Activated B cell treated with CpG ODN at 0.5 μM for 24 hours (primary cell): ENCODE measurements at regions of chr1 and their contacts with region 1.

Region 1: DNA sequence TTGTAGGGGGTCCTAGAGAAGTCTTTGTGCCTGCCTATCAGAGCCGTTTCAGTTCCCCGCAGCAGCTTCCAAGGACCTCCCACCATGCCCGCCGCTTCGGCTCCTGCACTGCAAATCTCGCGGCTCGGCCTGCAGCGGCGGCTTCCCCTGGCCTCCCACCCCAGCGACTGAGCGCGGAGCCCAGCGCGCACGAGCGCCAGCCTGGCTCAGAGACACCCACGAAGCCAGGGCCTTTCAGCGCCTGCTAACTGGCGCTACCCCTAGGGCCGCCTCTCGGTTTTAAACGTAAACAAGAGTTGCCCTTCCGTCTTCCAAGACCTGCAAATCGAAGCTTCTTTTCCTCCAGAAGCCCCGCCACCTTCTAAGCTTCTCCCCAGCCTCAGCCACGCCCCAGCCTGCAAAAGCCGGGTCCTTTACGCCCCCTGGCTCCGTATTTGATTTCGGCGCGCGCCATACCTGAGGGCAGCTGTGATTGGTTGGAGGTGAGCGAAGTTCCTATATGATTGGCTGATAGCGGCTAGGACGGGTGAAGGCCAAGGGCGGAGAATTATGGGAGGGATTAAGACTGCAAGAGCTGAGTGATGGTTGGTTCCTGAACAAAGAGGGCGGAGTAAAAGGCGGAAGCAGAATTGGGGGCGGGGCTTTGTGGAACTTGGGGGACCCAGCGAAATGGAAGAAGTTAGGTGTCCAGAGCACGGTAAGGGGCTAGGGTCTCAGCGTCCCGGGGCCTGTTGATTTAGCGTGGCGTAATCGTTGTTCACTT is at the start of gene TTF2:
- DNase-seq: peak; percentile 80
- ATAC-seq: peak; percentile 97
- H3K4me3 Mint-ChIP-seq: no peak within 1 kb of the TSS
- H3K27ac Mint-ChIP-seq: no peak within 1 kb of the TSS
- H3K4me1 Mint-ChIP-seq: peaks cover 26% of the 10 kb centered on the region
- H3K27me3 Mint-ChIP-seq: no peaks in the 10 kb centered on the region
- CTCF ChIP-seq: no peak
- total RNA-seq, gene TTF2: 33.4 and 37.7 TPM in 2 replicates

Region 2: DNA sequence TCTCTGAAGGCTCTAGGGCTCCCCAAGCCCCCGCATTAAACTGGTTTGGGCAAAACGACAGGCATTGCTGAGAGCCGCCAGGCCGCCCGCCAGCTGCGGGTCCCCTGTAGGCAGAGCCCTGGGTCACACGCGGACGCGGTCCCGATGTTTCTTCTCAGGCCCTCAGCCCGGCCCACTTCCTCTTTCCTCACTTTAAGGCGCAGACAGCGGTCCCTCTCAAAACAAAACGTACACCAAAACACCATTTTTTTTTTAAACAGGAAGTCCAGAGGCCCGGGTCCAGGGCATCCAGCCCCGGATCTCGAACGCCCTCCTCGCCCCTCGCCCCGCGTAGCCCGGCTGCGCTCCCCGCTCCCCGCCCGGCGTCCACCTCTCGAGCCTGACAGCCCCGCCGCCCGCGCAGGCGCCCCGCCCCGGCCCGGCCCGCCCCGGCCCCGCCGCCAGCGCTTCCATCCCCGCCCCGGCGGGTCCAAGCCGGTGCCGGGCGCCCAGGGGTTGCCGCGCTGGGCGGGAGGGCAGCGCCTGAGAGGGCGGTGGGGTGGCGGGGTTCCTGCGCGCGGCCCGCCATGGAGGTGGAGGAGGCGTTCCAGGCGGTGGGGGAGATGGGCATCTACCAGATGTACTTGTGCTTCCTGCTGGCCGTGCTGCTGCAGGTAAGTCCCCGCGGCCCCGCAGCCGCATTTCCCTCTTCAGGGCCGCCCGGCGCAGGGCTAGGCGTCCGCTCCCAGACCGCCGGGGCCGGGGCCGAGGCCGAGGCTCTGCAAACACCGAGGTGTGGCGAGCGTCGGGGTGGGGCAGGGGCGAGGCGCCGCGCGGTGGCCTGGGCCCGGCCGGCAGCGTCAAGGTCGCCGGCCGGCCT is 1083.6 kb before region 1 on chr1 and contains the start of gene SLC22A15:
- CTCF ChIA-PET with region 1: no interaction called
- POLR2A ChIA-PET with region 1: no interaction called
- intact Hi-C with region 1: loop called (anchors 5 kb)
- DNase-seq: peak; percentile 63
- ATAC-seq: peak; percentile 90
- H3K4me3 Mint-ChIP-seq: peak within 1 kb of the TSS; percentile 82
- H3K27ac Mint-ChIP-seq: peak within 1 kb of the TSS; percentile 71
- H3K4me1 Mint-ChIP-seq: peaks cover 16% of the 10 kb centered on the region
- H3K27me3 Mint-ChIP-seq: peaks cover 3% of the 10 kb centered on the region
- CTCF ChIP-seq: no peak
- total RNA-seq, gene SLC22A15: 4.1 and 4.6 TPM in 2 replicates

Region 3: DNA sequence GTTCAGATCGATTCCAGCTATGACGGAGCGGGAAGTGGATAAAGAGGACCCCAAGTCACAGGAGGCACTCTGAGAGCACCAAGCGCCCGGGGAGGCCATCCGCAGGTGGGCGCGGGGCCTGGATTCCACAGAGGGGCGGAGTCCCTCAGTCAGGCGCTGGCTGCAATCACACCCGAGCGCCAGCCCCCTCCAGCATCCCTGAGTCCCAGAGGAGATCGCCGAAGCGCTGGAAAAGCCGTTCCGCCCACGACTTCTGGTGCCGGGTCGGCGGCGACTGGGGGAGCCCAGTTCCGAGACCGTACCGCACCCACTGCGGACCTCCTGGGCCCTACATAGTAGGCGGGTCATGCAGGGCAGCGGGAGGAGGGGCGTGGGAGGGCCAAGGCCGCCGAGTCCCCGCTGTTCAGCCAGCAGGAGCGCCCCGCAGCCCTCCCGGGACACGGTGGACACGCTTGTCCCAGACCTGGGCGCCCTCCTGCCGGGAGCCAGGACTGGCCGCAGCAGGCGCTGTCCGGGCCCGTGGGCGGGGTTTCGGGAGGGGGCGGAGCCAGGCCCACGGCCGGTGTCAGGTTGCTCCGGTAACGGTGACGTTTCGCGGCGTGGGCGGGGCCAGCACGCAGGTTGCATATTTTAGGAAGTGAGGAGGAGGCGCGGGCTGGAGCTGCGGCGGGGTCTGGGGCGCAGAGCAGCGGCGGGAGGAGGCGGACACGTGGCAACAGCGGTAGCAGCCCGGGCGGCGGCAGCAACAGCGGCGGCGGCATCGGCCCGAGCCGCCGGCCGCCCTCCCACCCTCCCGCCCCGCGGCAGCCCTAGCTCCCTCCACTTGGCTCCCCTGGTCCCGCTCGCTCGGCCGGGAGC is 687.0 kb before region 1 on chr1 and contains the start of gene ATP1A1:
- CTCF ChIA-PET with region 1: no interaction called
- POLR2A ChIA-PET with region 1: no interaction called
- intact Hi-C with region 1: loop called (anchors 2 kb)
- DNase-seq: peak; percentile 99
- ATAC-seq: peak; percentile 75
- H3K4me3 Mint-ChIP-seq: peak within 1 kb of the TSS; percentile 91
- H3K27ac Mint-ChIP-seq: peak within 1 kb of the TSS; percentile 94
- H3K4me1 Mint-ChIP-seq: peaks cover 38% of the 10 kb centered on the region
- H3K27me3 Mint-ChIP-seq: peaks cover 2% of the 10 kb centered on the region
- CTCF ChIP-seq: no peak
- total RNA-seq, gene ATP1A1: 139 and 151 TPM in 2 replicates

Region 4: DNA sequence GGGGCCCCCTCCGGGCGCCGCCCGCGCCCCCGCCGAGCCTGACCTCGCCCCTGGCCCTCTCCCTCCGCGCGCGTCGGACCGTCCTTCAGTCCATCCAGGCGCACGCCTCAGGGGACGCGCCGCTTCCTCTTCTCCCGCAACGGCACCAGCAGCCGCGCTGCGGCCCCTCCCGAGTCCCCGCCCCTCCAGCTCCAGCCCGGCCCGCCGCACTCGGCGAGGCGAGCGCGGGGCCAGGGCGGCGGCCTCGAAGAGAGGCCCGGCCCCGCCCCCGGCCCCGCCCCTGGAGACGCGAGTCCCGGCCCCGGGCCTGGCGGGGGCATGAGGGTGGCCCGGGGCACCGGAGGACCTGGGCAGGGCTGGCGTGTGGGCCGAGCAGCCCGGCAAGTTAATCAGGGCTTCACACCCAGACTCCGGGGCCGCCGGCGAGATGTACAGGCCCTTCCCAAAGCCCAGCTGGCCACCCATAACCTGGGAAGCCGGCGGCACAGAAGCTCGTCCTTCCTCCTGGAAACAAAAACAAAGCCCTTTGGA is 392.2 kb before region 1 on chr1 and contains the start of gene IGSF3:
- CTCF ChIA-PET with region 1: no interaction called
- POLR2A ChIA-PET with region 1: no interaction called
- intact Hi-C with region 1: loop called (anchors 5 kb)
- DNase-seq: peak; percentile 36
- ATAC-seq: peak; percentile 84
- H3K4me3 Mint-ChIP-seq: peak within 1 kb of the TSS; percentile 83
- H3K27ac Mint-ChIP-seq: no peak within 1 kb of the TSS
- H3K4me1 Mint-ChIP-seq: peaks cover 16% of the 10 kb centered on the region
- H3K27me3 Mint-ChIP-seq: peaks cover 40% of the 10 kb centered on the region
- CTCF ChIP-seq: no peak
- total RNA-seq, gene IGSF3: 6.8 and 7.2 TPM in 2 replicates

Region 5: GRCh38 chr1:116763787-116764465 is 295.9 kb before region 1 on chr1:
- CTCF ChIA-PET with region 1: no interaction called
- POLR2A ChIA-PET with region 1: no interaction called
- intact Hi-C with region 1: loop called (anchors 1 kb)
- DNase-seq: no peak
- ATAC-seq: no peak
- H3K4me3 Mint-ChIP-seq: no peak overlapping the region
- H3K27ac Mint-ChIP-seq: no peak overlapping the region
- H3K4me1 Mint-ChIP-seq: peaks cover 6% of the 10 kb centered on the region
- H3K27me3 Mint-ChIP-seq: no peaks in the 10 kb centered on the region
- CTCF ChIP-seq: no peak

Region 6: DNA sequence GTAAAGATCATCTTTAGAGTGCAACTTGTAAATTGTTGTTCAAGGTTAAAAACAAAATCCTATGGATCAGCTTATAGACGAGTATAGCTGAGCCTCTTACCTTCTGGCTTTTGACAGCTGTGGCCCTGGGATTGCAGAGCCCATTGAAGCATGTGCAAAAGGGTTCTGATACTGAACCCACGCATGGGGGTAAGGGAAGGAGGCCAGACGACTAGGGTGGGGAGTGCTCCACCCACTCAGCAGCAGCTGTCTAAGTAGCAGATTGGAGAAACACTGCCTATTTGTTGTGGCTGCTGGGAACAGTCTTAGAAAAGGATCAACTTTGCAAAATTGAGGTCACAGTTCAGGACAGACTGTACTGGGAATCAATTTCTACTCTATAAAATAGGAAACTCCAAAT is 42.2 kb before region 1 on chr1:
- CTCF ChIA-PET with region 1: no interaction called
- POLR2A ChIA-PET with region 1: no interaction called
- intact Hi-C with region 1: no loop called
- DNase-seq: no peak
- ATAC-seq: no peak
- H3K4me3 Mint-ChIP-seq: no peak overlapping the region
- H3K27ac Mint-ChIP-seq: no peak overlapping the region
- H3K4me1 Mint-ChIP-seq: no peaks in the 10 kb centered on the region
- H3K27me3 Mint-ChIP-seq: no peaks in the 10 kb centered on the region
- CTCF ChIP-seq: no peak

Region 7: GRCh38 chr1:117534995-117535467 is 475.2 kb after region 1 on chr1:
- CTCF ChIA-PET with region 1: no interaction called
- POLR2A ChIA-PET with region 1: no interaction called
- intact Hi-C with region 1: loop called (anchors 10 kb)
- DNase-seq: peak; percentile 26
- ATAC-seq: peak; percentile 85
- H3K4me3 Mint-ChIP-seq: peak overlapping the region; percentile 16
- H3K27ac Mint-ChIP-seq: no peak overlapping the region
- H3K4me1 Mint-ChIP-seq: peaks cover 2% of the 10 kb centered on the region
- H3K27me3 Mint-ChIP-seq: no peaks in the 10 kb centered on the region
- CTCF ChIP-seq: no peak

Region 8: DNA sequence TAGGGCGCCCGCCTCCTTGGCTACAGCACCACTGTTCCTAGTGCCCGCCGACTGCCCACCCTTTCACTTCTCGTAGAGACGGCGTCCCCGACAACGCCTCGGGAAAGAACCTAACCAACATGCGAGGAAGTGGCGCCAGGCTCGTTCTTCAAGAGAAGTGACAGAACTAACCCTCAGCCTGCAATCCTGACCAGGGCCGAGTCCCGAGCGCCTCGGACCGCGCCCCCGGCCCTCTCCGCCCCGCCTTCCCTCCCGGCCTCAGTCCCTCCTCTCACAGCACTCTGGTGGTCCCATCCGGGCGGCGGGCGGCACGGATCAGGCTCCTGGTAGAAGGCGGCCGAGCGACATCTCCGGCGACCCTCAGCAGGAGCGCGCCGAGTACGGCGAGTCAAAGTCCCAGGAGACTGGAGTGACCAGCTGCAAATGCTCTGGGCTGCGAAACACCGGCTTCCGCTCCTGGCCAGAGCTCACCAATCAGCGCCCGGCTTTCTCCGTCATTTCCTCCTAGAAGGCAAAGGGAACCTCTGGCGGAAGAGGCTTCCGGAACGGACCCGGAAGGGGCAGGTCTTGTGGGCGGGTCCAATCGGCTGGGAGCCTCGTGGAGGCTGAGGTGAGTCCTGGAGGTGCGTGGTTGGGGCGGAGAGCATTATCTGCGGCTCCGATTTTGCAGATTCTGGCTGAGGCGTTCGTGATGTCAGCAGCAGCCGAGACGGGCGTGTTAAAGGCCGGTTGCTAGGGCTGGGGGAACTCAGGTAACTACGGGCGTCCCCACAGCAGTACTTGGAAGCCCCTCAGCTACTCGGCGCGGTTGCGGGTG is 869.5 kb after region 1 on chr1 and contains the starts of genes GDAP2 and WDR3:
- CTCF ChIA-PET with region 1: no interaction called
- POLR2A ChIA-PET with region 1: no interaction called
- intact Hi-C with region 1: loop called (anchors 2 kb)
- DNase-seq: peak; percentile 84
- ATAC-seq: peak; percentile 91
- H3K4me3 Mint-ChIP-seq: peak within 1 kb of the TSS; percentile 94
- H3K27ac Mint-ChIP-seq: peak within 1 kb of the TSS; percentile 91
- H3K4me1 Mint-ChIP-seq: peaks cover 57% of the 10 kb centered on the region
- H3K27me3 Mint-ChIP-seq: no peaks in the 10 kb centered on the region
- CTCF ChIP-seq: no peak
- total RNA-seq, gene GDAP2: 19.6 and 20.6 TPM in 2 replicates
- total RNA-seq, gene WDR3: 32.7 and 38.0 TPM in 2 replicates